ENCODE measurements at regions of chr13 and their contacts with region 1.

Region 1: GRCh38 chr13:22278336-22278929 is 607.6 kb downstream of the FGF9 start:
- DNase-seq: peak in 1 of 2 donors; percentile 32
- H3K4me3 ChIP-seq: no peak overlapping the region
- CTCF ChIP-seq: no peak
- POLR2A ChIP-seq: no peak

Region 2: GRCh38 chr13:21641629-21642028 is 636.8 kb before region 1 on chr13:
- intact Hi-C with region 1: loop called (anchors 10 kb)
- DNase-seq: no peak
- H3K4me3 ChIP-seq: no peak overlapping the region
- CTCF ChIP-seq: no peak
- POLR2A ChIP-seq: no peak

Measured in lower leg skin (tissue), 4 donors.